ENCODE measurements at regions of chr14 and their contacts with region 1.

Region 1: GRCh38 chr14:95534299-95535225 is at the start of gene GLRX5:
- DNase-seq: peak; percentile 100
- ATAC-seq: peak; percentile 84
- H3K4me3 ChIP-seq: peak within 1 kb of the TSS; percentile 54 to 90 (median 79)
- H3K4me3 Mint-ChIP-seq: peak within 1 kb of the TSS; percentile 93
- H3K27ac ChIP-seq: peak within 1 kb of the TSS; percentile 72 to 93
- H3K27ac Mint-ChIP-seq: peak within 1 kb of the TSS; percentile 93
- H3K4me1 ChIP-seq: peaks cover 23 to 36% of the 10 kb centered on the region in 2 donors
- H3K4me1 Mint-ChIP-seq: peaks cover 55% of the 10 kb centered on the region
- H3K27me3 ChIP-seq: no peaks in the 10 kb centered on the region
- H3K27me3 Mint-ChIP-seq: no peaks in the 10 kb centered on the region
- CTCF ChIP-seq: no peak
- total RNA-seq, gene GLRX5: 17.0 and 18.4 TPM in 2 replicates

Region 2: DNA sequence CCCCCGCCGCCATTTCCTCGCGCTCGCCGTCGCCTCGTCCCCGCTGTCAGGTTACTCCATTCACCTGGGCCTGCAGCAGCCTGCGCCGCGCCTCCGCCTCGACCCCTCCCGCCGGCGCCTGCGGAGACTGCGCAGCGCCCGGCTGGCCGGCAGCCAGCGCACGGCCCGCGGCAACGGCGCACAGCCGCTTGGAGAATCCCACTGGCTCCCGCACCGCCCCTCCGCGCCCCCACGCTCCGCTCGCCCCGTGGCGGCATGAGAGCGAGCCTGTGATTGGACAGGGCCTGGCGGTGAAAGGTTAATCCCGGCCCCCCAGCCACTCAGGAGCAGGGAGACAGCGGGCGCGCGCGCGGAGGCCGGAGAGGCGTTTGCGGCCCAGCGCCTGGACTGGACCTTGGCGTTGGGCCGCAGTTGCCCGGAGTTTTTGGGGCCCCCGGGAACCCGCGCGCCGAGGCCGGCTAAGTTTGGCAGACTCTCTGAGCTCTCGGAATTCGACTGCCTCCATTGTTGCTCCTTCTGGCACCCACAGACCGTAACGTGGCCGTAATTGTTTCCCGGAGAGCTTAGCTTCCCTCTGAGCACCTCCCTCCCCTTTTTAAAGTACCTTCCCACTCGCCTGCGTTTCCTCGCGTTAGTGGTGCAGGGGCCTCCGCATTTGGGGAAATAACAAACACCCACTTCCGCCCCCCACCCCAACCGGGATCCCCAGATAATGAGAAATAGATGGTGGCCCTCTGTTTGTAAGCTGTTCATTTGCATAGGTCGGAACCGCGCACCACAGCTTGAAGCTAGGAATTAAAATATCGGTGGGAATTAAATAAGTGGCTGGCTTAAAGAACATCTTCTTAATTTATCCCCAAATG is 377.0 kb before region 1 on chr14 and contains the start of gene DICER1:
- CTCF ChIA-PET with region 1: no interaction called
- POLR2A ChIA-PET with region 1: no interaction called
- intact Hi-C with region 1: loop called (anchors 1 kb)
- DNase-seq: peak; percentile 95
- ATAC-seq: peak; percentile 82
- H3K4me3 ChIP-seq: peak within 1 kb of the TSS; percentile 69 to 98 (median 84)
- H3K4me3 Mint-ChIP-seq: peak within 1 kb of the TSS; percentile 99
- H3K27ac ChIP-seq: peak within 1 kb of the TSS; percentile 94
- H3K27ac Mint-ChIP-seq: peak within 1 kb of the TSS; percentile 100
- H3K4me1 ChIP-seq: peaks cover 20 to 34% of the 10 kb centered on the region in 2 donors
- H3K4me1 Mint-ChIP-seq: peaks cover 38% of the 10 kb centered on the region
- H3K27me3 ChIP-seq: no peaks in the 10 kb centered on the region
- H3K27me3 Mint-ChIP-seq: no peaks in the 10 kb centered on the region
- CTCF ChIP-seq: no peak
- total RNA-seq, gene DICER1: 90.4 and 103 TPM in 2 replicates

Region 3: GRCh38 chr14:95185033-95185766 is 349.4 kb before region 1 on chr14:
- CTCF ChIA-PET with region 1: no interaction called
- POLR2A ChIA-PET with region 1: no interaction called
- intact Hi-C with region 1: no loop called
- DNase-seq: no peak
- ATAC-seq: no peak
- H3K4me3 ChIP-seq: peak overlapping the region in 1 of 5 experiments; percentile 79
- H3K4me3 Mint-ChIP-seq: no peak overlapping the region
- H3K27ac ChIP-seq: no peak overlapping the region
- H3K27ac Mint-ChIP-seq: no peak overlapping the region
- H3K4me1 ChIP-seq: peaks cover 5 to 6% of the 10 kb centered on the region in 2 donors
- H3K4me1 Mint-ChIP-seq: peaks cover 11% of the 10 kb centered on the region
- H3K27me3 ChIP-seq: peaks cover 0 to 19% (median 4%) of the 10 kb centered on the region in 4 experiments
- H3K27me3 Mint-ChIP-seq: peaks cover 26% of the 10 kb centered on the region
- CTCF ChIP-seq: no peak

Region 4: DNA sequence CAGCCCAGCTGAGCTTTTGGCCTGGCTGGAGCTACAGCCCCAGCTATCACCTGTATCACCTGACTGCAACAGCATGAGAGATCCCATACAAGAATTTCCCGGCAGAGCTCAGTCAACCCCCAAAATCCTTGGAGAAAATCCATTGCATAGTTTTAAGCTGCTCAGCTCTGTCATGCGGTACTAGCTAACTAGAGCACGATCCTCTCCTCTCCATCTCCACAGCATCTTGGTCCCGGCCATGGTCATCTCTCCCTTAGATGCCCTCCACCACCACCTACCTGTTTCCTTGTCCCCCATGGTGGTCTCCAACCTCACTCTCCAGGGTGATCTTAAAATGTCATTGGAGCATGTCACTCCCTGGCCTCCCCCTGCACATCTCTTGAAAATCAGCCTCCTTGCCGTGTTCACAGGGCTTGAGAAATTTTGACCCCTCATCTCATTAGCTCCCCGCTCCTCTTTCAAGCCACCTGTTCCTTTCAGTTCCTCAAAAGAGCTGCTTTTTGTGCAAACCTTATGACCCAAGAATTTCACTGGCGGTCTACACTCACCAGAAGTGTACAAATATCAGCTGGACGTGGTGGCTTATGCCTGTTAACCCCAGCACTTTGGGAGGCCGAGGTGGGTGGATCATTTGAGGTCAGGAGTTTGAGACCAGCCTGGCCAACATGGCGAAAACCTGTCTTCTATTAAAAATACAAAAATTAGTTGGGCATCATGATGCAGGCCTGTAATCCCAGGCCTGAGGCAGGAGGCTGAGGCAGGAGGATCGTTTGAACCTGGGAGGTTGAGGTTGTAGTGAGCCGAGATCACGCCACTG is 206.8 kb before region 1 on chr14:
- CTCF ChIA-PET with region 1: no interaction called
- POLR2A ChIA-PET with region 1: interaction called, 3 read pairs
- intact Hi-C with region 1: loop called (anchors 5 kb)
- DNase-seq: peak; percentile 88
- ATAC-seq: peak; percentile 86
- H3K4me3 ChIP-seq: peak overlapping the region in 4 of 5 experiments; percentile 20 to 42 (median 28)
- H3K4me3 Mint-ChIP-seq: peak overlapping the region; percentile 84
- H3K27ac ChIP-seq: peak overlapping the region; percentile 71 to 96
- H3K27ac Mint-ChIP-seq: peak overlapping the region; percentile 92
- H3K4me1 ChIP-seq: peaks cover 42 to 46% of the 10 kb centered on the region in 2 donors
- H3K4me1 Mint-ChIP-seq: peaks cover 54% of the 10 kb centered on the region
- H3K27me3 ChIP-seq: no peaks in the 10 kb centered on the region
- H3K27me3 Mint-ChIP-seq: no peaks in the 10 kb centered on the region
- CTCF ChIP-seq: no peak

Region 5: DNA sequence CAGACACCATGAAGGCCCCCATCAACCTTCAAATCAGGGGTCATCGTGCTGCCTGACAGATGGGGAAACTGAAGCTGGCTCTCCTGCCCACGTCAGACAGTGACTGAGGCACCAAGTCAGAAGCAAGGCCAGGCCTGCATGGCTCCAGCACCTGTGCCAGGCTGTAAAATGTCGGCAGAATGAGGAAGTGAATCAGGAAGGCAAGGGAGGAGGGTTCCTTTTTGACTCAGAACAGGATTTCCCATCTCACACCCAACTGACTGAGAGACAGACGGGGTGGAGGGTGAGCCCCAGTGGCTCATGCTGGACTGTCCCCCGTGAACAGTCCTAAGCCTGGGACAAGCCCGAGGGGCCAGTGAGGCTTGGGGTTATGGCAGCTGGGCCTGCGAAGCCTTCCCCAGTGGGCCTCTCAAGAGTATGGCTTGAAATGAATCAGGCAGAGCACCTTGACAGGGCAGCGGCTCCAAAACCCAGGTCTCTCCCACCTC is 39.0 kb before region 1 on chr14:
- CTCF ChIA-PET with region 1: interaction called, 3 read pairs
- POLR2A ChIA-PET with region 1: no interaction called
- intact Hi-C with region 1: loop called (anchors 1 kb)
- DNase-seq: peak; percentile 91
- ATAC-seq: peak; percentile 92
- H3K4me3 ChIP-seq: peak overlapping the region in 3 of 5 experiments; percentile 14 to 53 (median 21)
- H3K4me3 Mint-ChIP-seq: peak overlapping the region; percentile 70
- H3K27ac ChIP-seq: peak overlapping the region; percentile 97
- H3K27ac Mint-ChIP-seq: peak overlapping the region; percentile 95
- H3K4me1 ChIP-seq: peaks cover 47 to 78% of the 10 kb centered on the region in 2 donors
- H3K4me1 Mint-ChIP-seq: peaks cover 81% of the 10 kb centered on the region
- H3K27me3 ChIP-seq: no peaks in the 10 kb centered on the region
- H3K27me3 Mint-ChIP-seq: no peaks in the 10 kb centered on the region
- CTCF ChIP-seq: no peak

Region 6: DNA sequence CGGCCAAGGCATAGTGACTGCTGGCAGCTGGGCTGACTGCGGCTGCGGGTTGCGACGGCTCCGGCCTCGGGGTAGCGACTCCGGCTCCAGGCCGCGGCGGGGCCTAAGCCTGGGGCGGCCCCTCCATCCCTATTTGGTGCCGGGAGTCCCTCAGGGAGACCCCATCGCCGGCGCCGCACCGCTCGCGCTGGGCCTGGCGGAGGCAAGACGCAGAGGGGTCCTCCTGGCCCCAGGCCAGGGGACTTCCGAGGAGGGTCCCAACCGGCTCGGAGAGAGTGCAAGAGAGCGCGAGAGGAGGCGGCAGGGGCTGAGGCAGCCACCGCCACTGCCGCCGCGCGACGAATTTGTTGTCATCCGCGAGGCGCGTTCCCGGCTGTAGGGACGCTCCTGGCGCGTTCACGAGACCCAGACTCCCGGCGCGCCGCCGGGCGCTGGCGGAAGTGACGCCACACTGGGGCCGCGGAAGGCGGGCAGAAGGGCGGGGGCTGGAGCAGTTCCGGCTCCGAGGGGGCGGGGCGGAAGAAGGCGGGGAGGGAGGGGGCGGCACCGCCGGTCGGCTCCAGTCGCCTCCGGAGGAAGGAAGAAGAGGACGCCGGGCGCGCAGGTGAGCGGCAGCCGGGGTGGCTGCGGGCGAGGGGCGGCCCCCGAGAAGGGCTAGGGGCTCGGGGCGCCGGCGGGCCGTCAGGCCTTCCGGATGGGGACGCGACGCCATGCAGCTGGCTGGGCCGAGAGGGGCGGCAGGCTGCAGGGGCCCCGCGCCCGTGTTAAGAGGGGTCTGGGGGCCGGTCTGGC is 828.6 kb after region 1 on chr14 and contains the starts of genes ATG2B and GSKIP:
- CTCF ChIA-PET with region 1: no interaction called
- POLR2A ChIA-PET with region 1: no interaction called
- intact Hi-C with region 1: loop called (anchors 2 kb)
- DNase-seq: peak; percentile 97
- ATAC-seq: peak; percentile 80
- H3K4me3 ChIP-seq: peak within 1 kb of the TSS; percentile 75 to 97 (median 91)
- H3K4me3 Mint-ChIP-seq: peak within 1 kb of the TSS; percentile 89
- H3K27ac ChIP-seq: peak within 1 kb of the TSS; percentile 77 to 98
- H3K27ac Mint-ChIP-seq: peak within 1 kb of the TSS; percentile 91
- H3K4me1 ChIP-seq: peaks cover 25 to 28% of the 10 kb centered on the region in 2 donors
- H3K4me1 Mint-ChIP-seq: peaks cover 44% of the 10 kb centered on the region
- H3K27me3 ChIP-seq: no peaks in the 10 kb centered on the region
- H3K27me3 Mint-ChIP-seq: no peaks in the 10 kb centered on the region
- CTCF ChIP-seq: no peak
- total RNA-seq, gene ATG2B: 37.5 and 39.6 TPM in 2 replicates
- total RNA-seq, gene GSKIP: 14.9 and 15.8 TPM in 2 replicates